AG04450 (cell line): ENCODE measurements at regions of chr7 and their contacts with region 1.

Region 1: GRCh38 chr7:75762314-75762917 is 9.6 kb downstream of the CCL26 start:
- DNase-seq: peak; percentile 61
- H3K4me3 ChIP-seq: no peak overlapping the region
- H3K27ac ChIP-seq: no peak overlapping the region
- H3K27me3 ChIP-seq: no peaks in the 10 kb centered on the region
- CTCF ChIP-seq: peak; percentile 83

Region 2: GRCh38 chr7:75565132-75565837 is 197.1 kb before region 1 on chr7:
- CTCF ChIA-PET with region 1: interaction called, 12 read pairs
- POLR2A ChIA-PET with region 1: no interaction called
- DNase-seq: peak; percentile 62
- H3K4me3 ChIP-seq: no peak overlapping the region
- H3K27ac ChIP-seq: no peak overlapping the region
- H3K27me3 ChIP-seq: no peaks in the 10 kb centered on the region
- CTCF ChIP-seq: no peak

Region 3: DNA sequence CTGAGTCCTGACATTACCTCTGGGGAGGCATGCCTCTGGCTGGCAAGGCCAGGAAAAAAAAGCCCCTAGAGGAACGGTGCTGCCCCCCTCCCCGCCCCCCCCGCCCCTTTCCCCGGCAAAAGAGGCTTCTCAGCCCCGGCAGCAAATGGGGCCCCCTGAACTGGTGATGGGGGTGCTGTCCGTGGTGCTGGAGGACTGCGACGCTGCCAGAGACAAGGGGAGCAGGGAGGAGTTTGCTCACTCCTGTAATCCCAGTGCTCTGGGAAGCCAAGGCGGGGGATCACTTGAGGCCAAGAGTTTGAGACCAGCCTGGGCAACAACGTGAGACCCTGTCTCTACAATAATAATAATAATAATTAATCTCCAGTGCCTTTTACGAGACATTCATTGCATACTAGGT is 463.0 kb after region 1 on chr7:
- CTCF ChIA-PET with region 1: no interaction called
- POLR2A ChIA-PET with region 1: no interaction called
- DNase-seq: no peak
- H3K4me3 ChIP-seq: no peak overlapping the region
- H3K27ac ChIP-seq: no peak overlapping the region
- H3K27me3 ChIP-seq: peaks cover 4% of the 10 kb centered on the region
- CTCF ChIP-seq: no peak

Region 4: GRCh38 chr7:76236224-76236623 is 473.8 kb after region 1 on chr7:
- CTCF ChIA-PET with region 1: no interaction called
- POLR2A ChIA-PET with region 1: no interaction called
- DNase-seq: no peak
- H3K4me3 ChIP-seq: no peak overlapping the region
- H3K27ac ChIP-seq: no peak overlapping the region
- H3K27me3 ChIP-seq: peaks cover 31% of the 10 kb centered on the region
- CTCF ChIP-seq: no peak